ENCODE measurements at regions of chr12 and their contacts with region 1.

Region 1: GRCh38 chr12:56189176-56189917 is at the start of gene SMARCC2:
- DNase-seq: peak; percentile 94 to 95 (median 94)
- ATAC-seq: peak; percentile 89
- H3K4me3 ChIP-seq: peak within 1 kb of the TSS; percentile 85
- H3K27ac ChIP-seq: peak within 1 kb of the TSS; percentile 88
- H3K4me1 ChIP-seq: peaks cover 4 to 16% of the 10 kb centered on the region in 2 experiments; a peak in 3 of 5 replicates
- H3K27me3 ChIP-seq: no peaks in the 10 kb centered on the region
- CTCF ChIP-seq: peak; percentile 72 to 95 (median 95)
- EP300 ChIP-seq: peak; percentile 6; the same call in 1 of the 2 replicates
- POLR2A ChIP-seq: peak; percentile 72; the same call in 1 of the 2 replicates
- RAD21 ChIP-seq: peak; percentile 40 to 73
- polyA plus RNA-seq, gene SMARCC2: 11.9 to 29.1 TPM

Region 2: DNA sequence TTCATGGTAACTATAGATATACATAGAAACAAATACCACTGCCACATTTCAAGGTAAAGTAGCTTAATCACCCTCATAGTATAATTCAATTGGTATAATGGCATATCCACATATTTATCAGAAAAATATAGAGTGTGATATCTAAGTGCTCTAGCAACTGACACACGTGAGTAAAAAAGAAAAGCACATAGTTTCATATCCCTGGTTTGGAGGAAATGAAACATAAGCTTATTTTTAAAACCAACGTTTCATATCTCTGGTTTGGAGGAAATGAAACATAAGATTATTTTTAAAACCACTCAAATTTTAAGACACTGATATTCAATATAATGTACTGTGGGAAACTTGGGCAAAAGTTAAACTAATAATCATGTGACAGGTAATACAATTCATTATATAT is 721.5 kb before region 1 on chr12:
- CTCF ChIA-PET with region 1: no interaction called
- POLR2A ChIA-PET with region 1: no interaction called
- in situ Hi-C with region 1: no loop called
- intact Hi-C with region 1: no loop called
- DNase-seq: no peak
- ATAC-seq: no peak
- H3K4me3 ChIP-seq: no peak overlapping the region
- H3K27ac ChIP-seq: no peak overlapping the region
- H3K4me1 ChIP-seq: no peaks in the 10 kb centered on the region
- H3K27me3 ChIP-seq: no peaks in the 10 kb centered on the region; a peak in 1 of 5 replicates
- CTCF ChIP-seq: no peak
- EP300 ChIP-seq: no peak
- POLR2A ChIP-seq: no peak
- RAD21 ChIP-seq: no peak

Region 3: GRCh38 chr12:56041552-56042429 is 147.6 kb before region 1 on chr12 and contains the start of gene RPS26:
- CTCF ChIA-PET with region 1: no interaction called
- POLR2A ChIA-PET with region 1: interaction called, 3 read pairs
- in situ Hi-C with region 1: no loop called
- intact Hi-C with region 1: loop called (anchors 5 kb)
- DNase-seq: peak; percentile 89 to 100 (median 92)
- ATAC-seq: peak; percentile 90
- H3K4me3 ChIP-seq: peak within 1 kb of the TSS; percentile 83
- H3K27ac ChIP-seq: peak within 1 kb of the TSS; percentile 98
- H3K4me1 ChIP-seq: peaks cover 13 to 25% of the 10 kb centered on the region in 2 experiments; a peak in 3 of 5 replicates
- H3K27me3 ChIP-seq: no peaks in the 10 kb centered on the region
- CTCF ChIP-seq: peak; percentile 42 to 82 (median 73)
- EP300 ChIP-seq: no peak
- POLR2A ChIP-seq: peak; percentile 100
- RAD21 ChIP-seq: peak; percentile 65 to 79
- polyA plus RNA-seq, gene RPS26: 1,319 to 1,589 TPM

Region 4: DNA sequence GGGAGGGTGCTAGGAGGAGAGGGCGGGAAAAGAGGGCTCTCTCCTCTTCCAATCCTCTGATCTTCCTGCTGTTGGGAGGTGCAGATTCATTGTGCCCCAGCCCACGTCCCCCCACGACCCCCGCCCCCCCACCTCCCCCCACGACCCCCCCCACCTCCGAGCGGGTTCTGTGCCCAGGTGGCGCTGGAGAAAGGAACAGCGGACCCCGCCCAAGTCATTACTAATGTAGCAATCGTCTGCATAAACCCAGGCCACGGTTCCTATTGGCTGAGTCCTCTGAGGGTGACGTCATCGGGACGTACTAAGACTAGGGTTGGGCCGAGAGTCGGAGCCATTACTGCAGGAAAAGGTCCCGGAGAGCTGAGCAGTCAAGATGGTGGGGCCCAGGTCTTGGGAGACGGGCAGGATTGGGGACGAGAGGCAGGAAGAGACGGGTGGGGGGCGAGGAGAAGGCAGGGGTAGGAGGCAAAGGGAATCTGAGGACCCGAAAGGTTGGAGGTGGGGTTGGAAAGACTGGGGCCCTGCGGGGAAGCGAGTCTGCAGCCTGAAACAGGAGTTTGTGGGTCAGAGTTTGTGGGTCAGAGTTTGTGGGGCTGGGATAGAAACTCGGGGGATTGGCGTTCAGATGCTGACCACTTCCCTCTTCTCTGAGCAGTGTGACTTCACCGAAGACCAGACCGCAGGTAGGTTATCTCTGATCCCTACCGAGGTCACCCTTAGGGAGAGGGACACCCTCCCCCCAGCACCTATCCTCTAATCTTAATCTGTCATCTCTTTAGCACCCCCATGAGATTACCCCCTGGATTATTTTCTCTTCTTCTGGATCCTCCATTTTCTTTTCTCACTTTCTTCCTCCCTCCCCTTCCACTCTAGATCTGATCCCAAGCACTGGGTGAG is 31.1 kb before region 1 on chr12 and contains the start of gene MYL6:
- CTCF ChIA-PET with region 1: no interaction called
- POLR2A ChIA-PET with region 1: interaction called, 15 read pairs
- in situ Hi-C with region 1: no loop called
- intact Hi-C with region 1: no loop called
- DNase-seq: peak; percentile 89 to 99 (median 94)
- ATAC-seq: peak; percentile 81
- H3K4me3 ChIP-seq: peak within 1 kb of the TSS; percentile 90
- H3K27ac ChIP-seq: peak within 1 kb of the TSS; percentile 98
- H3K4me1 ChIP-seq: peaks cover 40 to 52% of the 10 kb centered on the region in 2 experiments; a peak in 4 of 5 replicates
- H3K27me3 ChIP-seq: no peaks in the 10 kb centered on the region
- CTCF ChIP-seq: no peak
- EP300 ChIP-seq: no peak; the same call in 1 of the 2 replicates
- POLR2A ChIP-seq: peak; percentile 99
- RAD21 ChIP-seq: peak in 1 of 2 experiments; percentile 17; a peak in 1 of 4 replicates
- polyA plus RNA-seq, gene MYL6: 1,377 to 1,664 TPM

Region 5: GRCh38 chr12:56178347-56178746 is 11.0 kb before region 1 on chr12:
- CTCF ChIA-PET with region 1: no interaction called
- POLR2A ChIA-PET with region 1: interaction called, 48 read pairs
- in situ Hi-C with region 1: no loop called
- intact Hi-C with region 1: no loop called
- DNase-seq: no peak
- ATAC-seq: peak; percentile 18; the same call in 2 of the 3 replicates
- H3K4me3 ChIP-seq: no peak overlapping the region
- H3K27ac ChIP-seq: no peak overlapping the region
- H3K4me1 ChIP-seq: no peaks in the 10 kb centered on the region
- H3K27me3 ChIP-seq: no peaks in the 10 kb centered on the region
- CTCF ChIP-seq: no peak
- EP300 ChIP-seq: no peak
- POLR2A ChIP-seq: no peak
- RAD21 ChIP-seq: no peak

Region 6: DNA sequence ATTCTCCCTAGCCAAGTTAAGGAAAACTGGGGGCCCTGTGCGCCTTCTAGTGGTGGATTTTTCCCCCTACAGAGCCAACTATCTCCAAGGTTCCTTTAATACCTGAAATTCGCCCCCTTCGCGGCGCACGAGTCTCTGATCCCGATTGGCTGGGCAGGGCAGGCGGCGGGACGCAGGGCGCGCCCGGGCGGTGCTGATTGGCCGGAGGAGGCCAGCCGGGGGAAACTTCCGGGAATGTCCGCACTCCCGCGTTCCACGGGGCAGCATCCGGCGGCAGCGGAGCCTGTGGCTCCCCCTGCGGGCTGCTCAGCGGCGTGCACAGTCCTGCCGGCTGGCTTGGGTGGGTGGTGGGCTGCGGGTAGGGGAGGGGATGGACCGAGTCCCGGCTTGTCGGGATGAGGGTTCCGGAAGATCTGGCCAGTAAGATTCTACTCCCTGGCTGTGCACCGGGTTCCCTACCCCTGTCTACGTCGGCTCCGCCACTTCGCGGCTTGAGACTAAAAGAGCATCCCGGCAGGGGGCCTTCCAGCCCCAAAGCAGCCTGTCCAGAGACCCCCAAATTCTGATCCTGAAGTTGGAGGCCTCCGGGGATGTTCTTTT is 34.9 kb after region 1 on chr12 and contains the start of gene NABP2:
- CTCF ChIA-PET with region 1: interaction called, 31 read pairs
- POLR2A ChIA-PET with region 1: interaction called, 22 read pairs
- in situ Hi-C with region 1: no loop called
- intact Hi-C with region 1: loop called (anchors 1 kb)
- DNase-seq: peak; percentile 98 to 100 (median 99)
- ATAC-seq: peak; percentile 91
- H3K4me3 ChIP-seq: peak within 1 kb of the TSS; percentile 95
- H3K27ac ChIP-seq: peak within 1 kb of the TSS; percentile 93
- H3K4me1 ChIP-seq: peaks cover 26 to 31% of the 10 kb centered on the region in 2 experiments; a peak in 4 of 5 replicates
- H3K27me3 ChIP-seq: no peaks in the 10 kb centered on the region
- CTCF ChIP-seq: peak; percentile 81 to 96 (median 81)
- EP300 ChIP-seq: 0 out of 2 replicates have a peak, but pooled peaks have one; percentile 29
- POLR2A ChIP-seq: 0 out of 2 replicates have a peak, but pooled peaks have one; percentile 51
- RAD21 ChIP-seq: peak; percentile 77
- polyA plus RNA-seq, gene NABP2: 11.3 to 28.0 TPM

Region 7: DNA sequence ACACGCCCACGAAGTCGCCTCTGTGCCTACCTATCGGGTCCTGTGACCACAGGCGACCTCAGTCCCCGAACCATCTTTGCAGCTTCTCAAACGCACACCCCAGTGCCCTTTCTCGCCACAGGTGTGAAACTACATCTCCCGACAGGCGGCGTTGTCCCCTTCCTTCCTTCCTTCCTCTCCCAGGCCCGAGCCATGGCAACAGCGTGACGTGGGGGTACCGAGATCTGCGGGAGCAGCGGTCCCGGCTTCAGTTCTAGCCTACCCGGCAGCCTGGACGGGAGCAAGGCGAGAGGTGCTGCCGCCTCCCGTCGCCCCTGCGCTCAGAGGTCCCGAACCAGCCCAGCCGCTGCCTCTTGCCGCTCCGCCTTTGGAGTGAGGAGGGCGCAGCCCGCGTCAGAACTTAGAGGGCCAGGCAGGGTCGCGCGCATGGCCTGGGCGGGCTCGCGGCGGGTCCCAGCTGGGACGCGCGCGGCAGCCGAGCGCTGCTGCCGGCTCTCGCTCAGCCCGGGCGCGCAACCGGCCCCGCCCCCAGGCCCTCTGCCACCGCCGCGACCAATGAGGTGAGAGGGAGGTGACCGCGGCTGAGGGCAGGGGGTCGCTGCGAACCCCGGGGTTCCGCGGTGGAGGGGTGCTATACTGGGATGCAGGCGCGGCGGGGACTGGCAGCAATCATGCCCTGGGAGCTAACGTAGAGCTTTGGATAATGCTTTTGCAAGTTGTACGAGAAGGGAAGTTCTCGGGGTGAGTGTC is 77.5 kb after region 1 on chr12 and contains the start of gene COQ10A:
- CTCF ChIA-PET with region 1: interaction called, 4 read pairs
- POLR2A ChIA-PET with region 1: interaction called, 6 read pairs
- in situ Hi-C with region 1: no loop called
- intact Hi-C with region 1: loop called (anchors 2 kb)
- DNase-seq: peak; percentile 92 to 95 (median 93)
- ATAC-seq: peak; percentile 93
- H3K4me3 ChIP-seq: peak within 1 kb of the TSS; percentile 67
- H3K27ac ChIP-seq: peak within 1 kb of the TSS; percentile 77
- H3K4me1 ChIP-seq: peaks cover 11 to 19% of the 10 kb centered on the region in 2 experiments; a peak in 4 of 5 replicates
- H3K27me3 ChIP-seq: no peaks in the 10 kb centered on the region
- CTCF ChIP-seq: peak; percentile 64 to 79 (median 64)
- EP300 ChIP-seq: no peak
- POLR2A ChIP-seq: peak; percentile 90
- RAD21 ChIP-seq: peak; percentile 11 to 48; a peak in 3 of 4 replicates
- polyA plus RNA-seq, gene COQ10A: 3.1 to 5.7 TPM

Region 8: GRCh38 chr12:56468216-56469006 is 279.1 kb after region 1 on chr12 and contains the start of gene SPRYD4:
- CTCF ChIA-PET with region 1: interaction called, 3 read pairs
- POLR2A ChIA-PET with region 1: interaction called, 4 read pairs
- in situ Hi-C with region 1: loop called (anchors 5 kb)
- intact Hi-C with region 1: loop called (anchors 1 kb)
- DNase-seq: peak; percentile 95 to 97 (median 96)
- ATAC-seq: peak; percentile 91
- H3K4me3 ChIP-seq: peak within 1 kb of the TSS; percentile 66
- H3K27ac ChIP-seq: peak within 1 kb of the TSS; percentile 91
- H3K4me1 ChIP-seq: peaks cover 9 to 10% of the 10 kb centered on the region in 2 experiments; a peak in 3 of 5 replicates
- H3K27me3 ChIP-seq: no peaks in the 10 kb centered on the region
- CTCF ChIP-seq: peak; percentile 45 to 52 (median 50)
- EP300 ChIP-seq: no peak
- POLR2A ChIP-seq: peak; percentile 92
- RAD21 ChIP-seq: peak in 1 of 2 experiments; percentile 11; a peak in 2 of 4 replicates
- polyA plus RNA-seq, gene SPRYD4: 3.8 to 4.7 TPM

Measured in K562 (cell line).